Activated T-helper 1 cell treated with anti-CD3 and anti-CD28 coated beads, Interleukin-12 subunit alpha, Interleukin-12 subunit beta, Interleukin-2, Interleukin-4 antibody, amounts not matched to agents 30 ng/mL and 10 ng/mL and 1 ng/mL, durations not matched to agents 14 hours and 24 hours and 36 hours (primary cell): ENCODE measurements at regions of chr5 and their contacts with region 1.

Region 1: GRCh38 chr5:442335-443238 is at the start of gene EXOC3:
- DNase-seq: peak; percentile 76
- H3K4me3 Mint-ChIP-seq: peak within 1 kb of the TSS; percentile 97
- H3K27ac Mint-ChIP-seq: peak within 1 kb of the TSS; percentile 96
- H3K4me1 Mint-ChIP-seq: peaks cover 19% of the 10 kb centered on the region
- H3K27me3 Mint-ChIP-seq: peaks cover 3% of the 10 kb centered on the region
- total RNA-seq, gene EXOC3: 59.6 and 62.0 TPM in 2 replicates

Region 2: DNA sequence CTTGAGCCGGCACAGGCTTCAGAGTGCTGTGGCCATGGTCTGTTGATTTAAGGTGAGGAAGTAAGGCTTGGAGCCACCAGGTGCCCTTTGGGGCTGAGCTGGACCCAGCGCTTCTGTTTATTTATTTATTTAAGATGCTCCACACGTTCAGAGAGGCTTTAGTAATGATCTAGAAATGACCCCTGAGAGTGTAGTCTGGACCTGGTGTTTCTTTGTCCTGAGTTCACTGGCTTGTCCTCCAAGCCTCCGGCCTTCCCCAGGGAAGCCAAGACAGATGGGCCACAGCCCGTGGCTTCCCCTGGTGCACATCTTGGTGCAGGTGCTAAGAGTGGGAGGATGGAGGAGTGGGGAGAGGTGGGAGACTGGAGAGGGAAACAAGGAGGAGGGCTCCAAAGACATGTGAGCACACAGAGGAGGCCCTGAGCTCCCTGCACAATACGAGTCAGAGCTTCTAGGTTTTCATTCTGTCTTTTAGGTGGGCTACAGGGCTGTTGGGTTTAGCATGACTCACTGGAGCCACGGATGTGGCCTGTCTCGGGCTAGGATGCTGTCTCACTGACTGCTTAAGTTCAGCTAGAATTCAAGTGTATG is 64.2 kb before region 1 on chr5:
- intact Hi-C with region 1: no loop called
- DNase-seq: peak; percentile 40
- H3K4me3 Mint-ChIP-seq: peak overlapping the region; percentile 72
- H3K27ac Mint-ChIP-seq: peak overlapping the region; percentile 91
- H3K4me1 Mint-ChIP-seq: peaks cover 71% of the 10 kb centered on the region
- H3K27me3 Mint-ChIP-seq: no peaks in the 10 kb centered on the region

Region 3: DNA sequence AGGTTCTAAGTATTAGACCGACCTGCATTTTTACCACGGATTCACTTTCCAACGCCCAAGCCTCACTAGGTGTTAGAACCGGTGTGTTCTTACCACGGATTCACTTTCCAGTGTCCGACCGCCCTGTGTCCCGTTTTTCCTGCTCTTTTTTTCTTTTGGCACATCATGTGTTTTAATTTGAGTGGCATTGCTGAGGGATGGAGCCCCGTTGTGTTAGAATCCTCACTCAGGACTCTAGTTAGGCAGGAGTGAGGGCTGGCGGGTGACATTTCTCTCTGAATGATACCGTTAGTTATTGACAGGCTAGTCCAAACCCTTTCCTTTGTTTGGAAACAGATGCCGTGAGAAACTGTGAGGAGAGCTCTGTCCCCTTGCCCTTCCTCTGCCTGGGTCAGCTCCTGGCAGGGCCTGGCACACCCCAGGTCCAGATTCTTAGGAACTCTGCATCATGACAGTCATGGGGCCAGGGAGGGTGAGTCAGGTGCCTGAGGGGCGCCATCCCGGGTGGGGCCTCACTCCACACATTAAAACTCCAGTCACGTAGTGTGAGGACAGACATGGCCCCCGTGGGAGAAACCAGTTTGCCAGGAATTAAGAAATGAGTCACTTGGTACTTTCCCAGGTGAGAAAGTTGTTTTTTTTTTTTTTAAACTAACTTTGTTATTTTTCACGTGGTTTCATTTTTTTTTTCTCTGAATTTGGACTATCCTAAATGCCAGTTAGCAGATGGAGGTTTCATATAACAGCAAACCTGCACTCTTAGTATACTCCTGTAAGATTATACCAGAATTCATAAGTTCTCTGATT is 16.2 kb after region 1 on chr5:
- intact Hi-C with region 1: loop called (anchors 2 kb)
- DNase-seq: peak; percentile 56
- H3K4me3 Mint-ChIP-seq: peak overlapping the region; percentile 59
- H3K27ac Mint-ChIP-seq: peak overlapping the region; percentile 91
- H3K4me1 Mint-ChIP-seq: peaks cover 75% of the 10 kb centered on the region
- H3K27me3 Mint-ChIP-seq: no peaks in the 10 kb centered on the region

Region 4: GRCh38 chr5:626850-627249 is 184.3 kb after region 1 on chr5:
- intact Hi-C with region 1: no loop called
- DNase-seq: no peak
- H3K4me3 Mint-ChIP-seq: no peak overlapping the region
- H3K27ac Mint-ChIP-seq: no peak overlapping the region
- H3K4me1 Mint-ChIP-seq: no peaks in the 10 kb centered on the region
- H3K27me3 Mint-ChIP-seq: no peaks in the 10 kb centered on the region